ENCODE measurements at regions of chr1 and their contacts with region 1.

Region 1: GRCh38 chr1:156212833-156213643 is at the start of gene PMF1:
- DNase-seq: peak; percentile 97
- H3K4me3 Mint-ChIP-seq: peak within 1 kb of the TSS; percentile 87
- H3K27ac Mint-ChIP-seq: peak within 1 kb of the TSS; percentile 94
- H3K4me1 Mint-ChIP-seq: peaks cover 46% of the 10 kb centered on the region
- H3K27me3 Mint-ChIP-seq: no peaks in the 10 kb centered on the region
- total RNA-seq, gene PMF1: 65.5 to 67.7 TPM

Region 2: DNA sequence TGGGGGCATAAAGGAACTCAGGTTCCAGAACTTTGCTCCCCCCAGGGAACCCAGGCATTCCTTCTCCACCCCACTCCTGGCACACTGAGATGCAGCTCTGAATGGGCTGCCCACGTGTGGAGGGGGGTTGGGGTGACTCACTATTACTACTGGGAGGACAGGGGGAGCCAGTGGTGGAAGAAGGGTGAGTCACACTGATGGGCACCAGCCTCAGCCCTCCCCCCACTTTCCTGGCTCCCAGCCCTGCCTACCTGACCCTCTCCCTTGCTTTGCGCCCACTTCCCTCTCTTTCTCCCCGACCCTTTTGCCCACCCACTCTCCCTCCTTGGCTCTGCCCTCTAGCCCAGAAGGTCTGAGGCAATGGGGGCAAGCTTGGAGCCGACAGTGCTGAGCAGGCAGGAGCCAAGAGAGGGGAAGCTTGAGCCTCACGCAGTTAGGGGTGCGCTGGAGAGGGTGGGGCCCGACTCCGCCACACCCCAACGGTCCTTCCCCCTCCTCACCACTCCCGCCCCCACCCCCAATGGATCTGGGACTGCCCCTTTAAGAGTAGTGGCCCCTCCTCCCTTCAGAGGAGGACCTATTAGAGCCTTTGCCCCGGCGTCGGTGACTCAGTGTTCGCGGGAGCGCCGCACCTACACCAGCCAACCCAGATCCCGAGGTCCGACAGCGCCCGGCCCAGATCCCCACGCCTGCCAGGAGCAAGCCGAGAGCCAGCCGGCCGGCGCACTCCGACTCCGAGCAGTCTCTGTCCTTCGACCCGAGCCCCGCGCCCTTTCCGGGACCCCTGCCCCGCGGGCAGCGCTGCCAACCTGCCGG is 98.7 kb before region 1 on chr1 and contains the start of gene LMNA:
- CTCF ChIA-PET with region 1: no interaction called
- POLR2A ChIA-PET with region 1: interaction called, 13 read pairs
- DNase-seq: peak; percentile 77
- H3K4me3 Mint-ChIP-seq: peak within 1 kb of the TSS; percentile 95
- H3K27ac Mint-ChIP-seq: peak within 1 kb of the TSS; percentile 82
- H3K4me1 Mint-ChIP-seq: peaks cover 46% of the 10 kb centered on the region
- H3K27me3 Mint-ChIP-seq: peaks cover 17% of the 10 kb centered on the region
- total RNA-seq, gene LMNA: 93.6 to 101 TPM

Region 3: DNA sequence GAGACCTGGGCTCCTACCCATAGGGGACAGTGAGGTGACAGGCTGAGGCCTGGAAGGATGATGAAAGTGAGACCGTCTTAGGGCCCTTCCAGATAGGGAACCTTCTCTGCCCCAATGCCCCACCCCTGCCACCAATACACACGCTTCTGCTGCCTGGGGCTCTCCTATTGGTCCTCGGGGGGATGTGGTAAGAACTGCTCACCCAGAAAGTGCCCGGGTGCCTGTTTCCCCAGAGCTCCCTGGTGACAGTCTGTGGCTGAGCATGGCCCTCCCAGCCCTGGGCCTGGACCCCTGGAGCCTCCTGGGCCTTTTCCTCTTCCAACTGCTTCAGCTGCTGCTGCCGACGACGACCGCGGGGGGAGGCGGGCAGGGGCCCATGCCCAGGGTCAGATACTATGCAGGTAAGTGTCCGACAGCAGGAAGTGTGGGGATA is 58.7 kb before region 1 on chr1:
- CTCF ChIA-PET with region 1: interaction called, 5 read pairs
- POLR2A ChIA-PET with region 1: interaction called, 28 read pairs
- DNase-seq: peak; percentile 66
- H3K4me3 Mint-ChIP-seq: peak overlapping the region; percentile 76
- H3K27ac Mint-ChIP-seq: peak overlapping the region; percentile 71
- H3K4me1 Mint-ChIP-seq: peaks cover 63% of the 10 kb centered on the region
- H3K27me3 Mint-ChIP-seq: no peaks in the 10 kb centered on the region

Region 4: DNA sequence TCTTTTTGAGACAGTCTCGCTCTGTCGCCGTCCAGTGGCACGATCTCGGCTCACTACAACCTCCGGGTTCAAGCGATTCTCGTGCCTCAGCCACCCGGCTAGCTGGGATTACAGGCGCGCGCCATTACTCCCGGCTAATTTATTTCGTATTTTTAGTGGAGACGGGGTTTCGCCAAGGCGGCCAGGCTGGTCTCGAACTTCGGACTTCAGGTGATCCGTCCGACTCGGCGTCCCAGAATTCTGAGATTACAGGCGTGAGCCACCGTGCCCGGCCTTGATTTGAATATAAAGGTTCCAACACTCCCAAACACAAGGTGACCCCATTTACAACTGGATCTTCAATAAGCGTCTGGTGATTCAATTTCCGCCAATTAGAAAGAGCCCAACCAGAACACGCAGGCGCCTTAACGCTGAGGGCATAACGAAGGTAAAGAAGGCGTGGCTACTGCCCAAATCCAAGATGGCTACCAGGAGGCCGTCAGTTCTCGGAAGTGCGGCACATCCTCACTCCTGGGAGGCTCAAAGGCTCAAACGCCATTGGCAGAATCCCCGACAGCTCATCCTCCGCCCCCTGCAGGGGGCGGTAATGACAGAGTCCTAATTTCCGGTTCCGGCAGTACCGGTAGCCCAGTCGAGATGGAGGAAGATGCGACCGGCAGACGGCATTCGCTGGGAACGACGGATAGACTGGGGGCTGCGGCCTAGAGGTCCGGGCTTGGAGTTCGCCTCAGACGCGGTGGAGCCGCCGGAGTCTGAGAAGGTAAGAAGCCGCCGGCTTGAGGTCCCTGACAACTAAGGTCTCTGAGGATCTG is 19.3 kb before region 1 on chr1 and contains the start of gene SLC25A44:
- CTCF ChIA-PET with region 1: interaction called, 13 read pairs
- POLR2A ChIA-PET with region 1: interaction called, 156 read pairs
- DNase-seq: peak; percentile 98
- H3K4me3 Mint-ChIP-seq: peak within 1 kb of the TSS; percentile 85
- H3K27ac Mint-ChIP-seq: peak within 1 kb of the TSS; percentile 73
- H3K4me1 Mint-ChIP-seq: peaks cover 59% of the 10 kb centered on the region
- H3K27me3 Mint-ChIP-seq: no peaks in the 10 kb centered on the region
- total RNA-seq, gene SLC25A44: 27.7 to 36.3 TPM

Region 5: DNA sequence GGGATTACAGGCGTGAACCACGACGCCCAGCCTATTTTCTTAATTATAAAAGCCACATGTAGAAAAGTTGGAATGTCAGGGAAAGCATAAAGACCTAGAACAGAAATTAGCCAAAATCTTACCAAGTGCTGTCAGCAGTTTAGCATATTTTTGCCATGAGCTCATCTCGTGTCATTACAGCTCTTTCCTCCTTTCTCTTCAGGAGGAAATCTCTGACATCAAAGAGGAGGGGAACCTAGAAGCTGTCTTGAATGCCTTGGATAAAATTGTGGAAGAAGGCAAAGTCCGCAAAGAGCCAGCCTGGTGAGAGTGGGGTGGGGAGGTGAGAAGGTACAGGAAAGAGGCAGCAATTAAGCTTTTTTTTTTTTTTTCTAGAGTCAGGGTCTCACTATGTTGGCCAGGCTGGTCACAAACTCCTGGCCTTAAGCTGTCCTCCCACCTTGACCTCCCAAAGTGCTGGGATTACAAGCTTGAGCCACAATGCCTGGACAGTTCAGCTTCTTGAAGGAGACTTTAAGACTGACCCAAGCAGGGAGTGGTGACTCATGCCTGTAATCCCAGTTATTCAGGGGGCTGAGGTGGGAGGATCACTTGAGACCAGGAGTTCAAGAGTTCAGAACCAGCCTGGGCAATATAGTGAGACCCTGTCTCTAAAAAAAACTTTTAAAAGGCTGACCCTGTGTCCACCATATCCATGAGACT is 20.5 kb after region 1 on chr1:
- CTCF ChIA-PET with region 1: interaction called, 4 read pairs
- POLR2A ChIA-PET with region 1: interaction called, 12 read pairs
- DNase-seq: no peak
- H3K4me3 Mint-ChIP-seq: no peak overlapping the region
- H3K27ac Mint-ChIP-seq: no peak overlapping the region
- H3K4me1 Mint-ChIP-seq: peaks cover 7% of the 10 kb centered on the region
- H3K27me3 Mint-ChIP-seq: no peaks in the 10 kb centered on the region

Region 6: GRCh38 chr1:156310962-156311361 is 97.9 kb after region 1 on chr1:
- CTCF ChIA-PET with region 1: no interaction called
- POLR2A ChIA-PET with region 1: no interaction called
- DNase-seq: no peak
- H3K4me3 Mint-ChIP-seq: no peak overlapping the region
- H3K27ac Mint-ChIP-seq: no peak overlapping the region
- H3K4me1 Mint-ChIP-seq: no peaks in the 10 kb centered on the region
- H3K27me3 Mint-ChIP-seq: no peaks in the 10 kb centered on the region